ENCODE measurements at regions of chr22 and their contacts with region 1.

Region 1: DNA sequence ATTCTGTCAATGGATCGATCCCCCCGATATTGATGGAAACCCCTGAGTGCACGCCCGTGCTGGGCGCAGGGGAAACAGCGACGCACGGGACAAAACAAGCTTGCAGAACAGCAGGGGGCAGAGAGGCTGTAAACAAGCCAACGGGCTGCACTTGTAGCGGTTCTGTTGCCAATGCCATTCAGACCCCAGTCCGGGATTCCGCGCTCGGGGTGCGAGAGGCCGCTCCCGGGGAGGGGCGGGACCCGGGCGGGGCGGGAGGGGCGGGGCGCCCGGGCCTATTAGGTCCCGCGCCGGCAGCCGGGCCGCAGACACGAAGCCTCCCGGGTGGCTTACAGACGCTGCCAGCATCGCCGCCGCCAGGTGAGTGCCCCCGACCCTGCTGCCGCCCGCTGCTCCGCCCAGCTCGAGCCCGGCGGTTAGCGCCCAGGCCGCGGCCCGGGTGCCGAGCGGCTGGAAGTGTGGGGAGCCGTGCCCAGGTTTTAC is at the start of gene BIK:
- DNase-seq: peak; percentile 10 to 41 (median 29)
- ATAC-seq: peak; percentile 69
- H3K4me3 ChIP-seq: peak within 1 kb of the TSS; percentile 74
- H3K4me3 Mint-ChIP-seq: peak within 1 kb of the TSS; percentile 81 to 90 (median 84)
- H3K27ac ChIP-seq: peak within 1 kb of the TSS; percentile 53
- H3K27ac Mint-ChIP-seq: peak within 1 kb of the TSS in 5 of 9 donors; percentile 22 to 87 (median 72)
- H3K4me1 ChIP-seq: peaks cover 0 to 6% of the 10 kb centered on the region in 2 donors
- H3K4me1 Mint-ChIP-seq: peaks cover 0 to 9% (median 7%) of the 10 kb centered on the region in 7 donors
- H3K27me3 ChIP-seq: no peaks in the 10 kb centered on the region
- H3K27me3 Mint-ChIP-seq: peaks cover 0 to 45% (median 0%) of the 10 kb centered on the region in 5 donors
- total RNA-seq, gene BIK: 1.1 to 2.6 (median 1.4) TPM

Region 2: GRCh38 chr22:42901790-42902508 is 208.5 kb before region 1 on chr22:
- CTCF ChIA-PET with region 1: no interaction called
- POLR2A ChIA-PET with region 1: no interaction called
- intact Hi-C with region 1: no loop called
- DNase-seq: no peak
- ATAC-seq: no peak
- H3K4me3 ChIP-seq: no peak overlapping the region
- H3K4me3 Mint-ChIP-seq: no peak overlapping the region
- H3K27ac ChIP-seq: no peak overlapping the region
- H3K27ac Mint-ChIP-seq: peak overlapping the region in 1 of 9 donors; percentile 36
- H3K4me1 ChIP-seq: no peaks in the 10 kb centered on the region
- H3K4me1 Mint-ChIP-seq: peaks cover 0 to 21% (median 16%) of the 10 kb centered on the region in 7 donors
- H3K27me3 ChIP-seq: no peaks in the 10 kb centered on the region
- H3K27me3 Mint-ChIP-seq: no peaks in the 10 kb centered on the region

Region 3: GRCh38 chr22:43088979-43089717 is 21.3 kb before region 1 on chr22 and contains the start of gene TTLL1:
- CTCF ChIA-PET with region 1: no interaction called
- POLR2A ChIA-PET with region 1: no interaction called
- intact Hi-C with region 1: loop called (anchors 1 to 2 kb)
- DNase-seq: peak; percentile 79 to 90 (median 87)
- ATAC-seq: peak; percentile 93
- H3K4me3 ChIP-seq: peak within 1 kb of the TSS; percentile 49
- H3K4me3 Mint-ChIP-seq: peak within 1 kb of the TSS; percentile 77 to 98 (median 92)
- H3K27ac ChIP-seq: peak within 1 kb of the TSS; percentile 60
- H3K27ac Mint-ChIP-seq: peak within 1 kb of the TSS; percentile 49 to 96 (median 82)
- H3K4me1 ChIP-seq: peaks cover 8 to 13% of the 10 kb centered on the region in 2 donors
- H3K4me1 Mint-ChIP-seq: peaks cover 0 to 19% (median 17%) of the 10 kb centered on the region in 7 donors
- H3K27me3 ChIP-seq: no peaks in the 10 kb centered on the region
- H3K27me3 Mint-ChIP-seq: no peaks in the 10 kb centered on the region
- total RNA-seq, gene TTLL1: 4.6 to 7.7 (median 6.9) TPM

Region 4: GRCh38 chr22:43136255-43136654 is 25.8 kb after region 1 on chr22:
- CTCF ChIA-PET with region 1: no interaction called
- POLR2A ChIA-PET with region 1: no interaction called
- intact Hi-C with region 1: loop called in 1 of 2 experiments (anchors 2 kb)
- DNase-seq: peak in 5 of 9 donors; percentile 14 to 43 (median 27)
- ATAC-seq: peak; percentile 75
- H3K4me3 ChIP-seq: no peak overlapping the region
- H3K4me3 Mint-ChIP-seq: no peak overlapping the region
- H3K27ac ChIP-seq: no peak overlapping the region
- H3K27ac Mint-ChIP-seq: peak overlapping the region in 1 of 9 donors; percentile 55
- H3K4me1 ChIP-seq: no peaks in the 10 kb centered on the region
- H3K4me1 Mint-ChIP-seq: peaks cover 4 to 16% (median 8%) of the 10 kb centered on the region in 7 donors
- H3K27me3 ChIP-seq: no peaks in the 10 kb centered on the region
- H3K27me3 Mint-ChIP-seq: no peaks in the 10 kb centered on the region

Region 5: GRCh38 chr22:43151251-43152002 is 40.9 kb after region 1 on chr22 and contains the start of gene TSPO:
- CTCF ChIA-PET with region 1: interaction called, 4 read pairs
- POLR2A ChIA-PET with region 1: interaction called, 3 read pairs
- intact Hi-C with region 1: loop called in 1 of 2 experiments (anchors 1 kb)
- DNase-seq: peak; percentile 17 to 76 (median 39)
- ATAC-seq: peak; percentile 70
- H3K4me3 ChIP-seq: peak within 1 kb of the TSS; percentile 90
- H3K4me3 Mint-ChIP-seq: peak within 1 kb of the TSS; percentile 83 to 95 (median 92)
- H3K27ac ChIP-seq: peak within 1 kb of the TSS; percentile 78
- H3K27ac Mint-ChIP-seq: peak within 1 kb of the TSS; percentile 83 to 96 (median 93)
- H3K4me1 ChIP-seq: peaks cover 5 to 13% of the 10 kb centered on the region in 2 donors
- H3K4me1 Mint-ChIP-seq: peaks cover 16 to 47% (median 29%) of the 10 kb centered on the region in 7 donors
- H3K27me3 ChIP-seq: no peaks in the 10 kb centered on the region
- H3K27me3 Mint-ChIP-seq: no peaks in the 10 kb centered on the region
- total RNA-seq, gene TSPO: 56.1 to 190 (median 61.5) TPM

Region 6: GRCh38 chr22:43181321-43182076 is 71.0 kb after region 1 on chr22:
- CTCF ChIA-PET with region 1: no interaction called
- POLR2A ChIA-PET with region 1: no interaction called
- intact Hi-C with region 1: no loop called
- DNase-seq: no peak
- ATAC-seq: no peak
- H3K4me3 ChIP-seq: no peak overlapping the region
- H3K4me3 Mint-ChIP-seq: no peak overlapping the region
- H3K27ac ChIP-seq: no peak overlapping the region
- H3K27ac Mint-ChIP-seq: peak overlapping the region in 1 of 9 donors; percentile 2
- H3K4me1 ChIP-seq: peaks cover 10 to 12% of the 10 kb centered on the region in 2 donors
- H3K4me1 Mint-ChIP-seq: peaks cover 5 to 23% (median 17%) of the 10 kb centered on the region in 7 donors
- H3K27me3 ChIP-seq: no peaks in the 10 kb centered on the region
- H3K27me3 Mint-ChIP-seq: no peaks in the 10 kb centered on the region